WTC11 (cell line): ENCODE measurements at regions of chr6 and their contacts with region 1.

Region 1: GRCh38 chr6:127641905-127642304 is 64.9 kb downstream of the C6orf58 start:
- DNase-seq: peak; percentile 31
- ATAC-seq: peak; percentile 99
- H3K4me3 Mint-ChIP-seq: no peak overlapping the region
- H3K27ac Mint-ChIP-seq: no peak overlapping the region
- H3K4me1 Mint-ChIP-seq: no peaks in the 10 kb centered on the region
- H3K27me3 Mint-ChIP-seq: peaks cover 2% of the 10 kb centered on the region; the same call in 1 of the 2 replicates
- CTCF ChIP-seq: peak; percentile 64

Region 2: DNA sequence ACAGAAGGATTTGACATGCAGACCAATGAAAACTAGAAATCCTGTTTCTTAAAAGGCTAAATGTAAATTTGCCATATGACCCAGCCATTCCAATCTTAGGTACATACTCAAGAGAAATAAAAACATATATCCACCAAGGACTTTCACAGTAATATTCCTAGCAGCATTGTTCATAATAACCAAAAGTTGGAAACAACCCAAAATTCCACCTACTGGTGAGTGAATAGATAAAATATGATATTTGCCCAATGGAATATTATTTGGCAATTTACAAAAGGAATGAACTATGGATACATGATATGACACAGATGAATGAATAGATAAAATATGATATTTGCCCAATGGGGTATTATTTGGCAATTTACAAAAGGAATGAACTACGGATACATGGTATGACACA is 145.4 kb before region 1 on chr6:
- CTCF ChIA-PET with region 1: no interaction called
- POLR2A ChIA-PET with region 1: no interaction called
- DNase-seq: no peak
- ATAC-seq: no peak
- H3K4me3 Mint-ChIP-seq: no peak overlapping the region
- H3K27ac Mint-ChIP-seq: no peak overlapping the region
- H3K4me1 Mint-ChIP-seq: no peaks in the 10 kb centered on the region
- H3K27me3 Mint-ChIP-seq: no peaks in the 10 kb centered on the region
- CTCF ChIP-seq: no peak

Region 3: GRCh38 chr6:127606131-127606562 is 35.8 kb before region 1 on chr6:
- CTCF ChIA-PET with region 1: interaction called, 12 read pairs
- POLR2A ChIA-PET with region 1: no interaction called
- DNase-seq: peak; percentile 24
- ATAC-seq: peak; percentile 94
- H3K4me3 Mint-ChIP-seq: no peak overlapping the region
- H3K27ac Mint-ChIP-seq: no peak overlapping the region
- H3K4me1 Mint-ChIP-seq: no peaks in the 10 kb centered on the region
- H3K27me3 Mint-ChIP-seq: no peaks in the 10 kb centered on the region
- CTCF ChIP-seq: no peak

Region 4: DNA sequence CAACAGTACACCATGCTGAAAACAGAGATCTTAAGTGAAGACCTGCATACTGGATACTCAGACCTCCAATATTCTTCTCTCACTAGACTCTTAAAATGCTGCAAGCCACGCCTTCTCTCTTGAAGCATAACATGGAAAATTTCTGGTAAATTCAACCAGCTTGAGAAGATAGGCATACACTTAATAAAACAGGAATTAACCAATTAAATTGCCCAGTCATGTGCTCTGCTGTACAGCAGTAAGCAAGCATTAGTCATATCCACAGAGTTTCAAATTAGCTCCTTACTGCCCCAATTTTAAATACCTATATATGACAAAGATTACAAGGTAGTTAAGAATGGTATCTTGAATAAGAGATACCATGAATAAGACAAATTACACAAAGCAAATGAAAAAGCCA is 11.1 kb before region 1 on chr6:
- CTCF ChIA-PET with region 1: interaction called, 16 read pairs
- POLR2A ChIA-PET with region 1: no interaction called
- DNase-seq: no peak
- ATAC-seq: no peak
- H3K4me3 Mint-ChIP-seq: no peak overlapping the region
- H3K27ac Mint-ChIP-seq: no peak overlapping the region
- H3K4me1 Mint-ChIP-seq: no peaks in the 10 kb centered on the region
- H3K27me3 Mint-ChIP-seq: no peaks in the 10 kb centered on the region
- CTCF ChIP-seq: no peak